Tibial artery (tissue), 4 donors: ENCODE measurements at regions of chr7 and their contacts with region 1.

Region 1: GRCh38 chr7:149090397-149091195 is at the start of gene ZNF786:
- DNase-seq: peak; percentile 78 to 91
- H3K4me3 ChIP-seq: peak within 1 kb of the TSS; percentile 92 to 99
- H3K27ac ChIP-seq: peak within 1 kb of the TSS; percentile 97 to 99
- H3K4me1 ChIP-seq: peaks cover 0 to 17% (median 9%) of the 10 kb centered on the region in 4 donors
- H3K27me3 ChIP-seq: no peaks in the 10 kb centered on the region
- CTCF ChIP-seq: peak; percentile 94

Region 2: GRCh38 chr7:149005241-149006050 is 85.2 kb before region 1 on chr7:
- intact Hi-C with region 1: loop called (anchors 2 kb)
- DNase-seq: peak; percentile 80 to 87
- H3K4me3 ChIP-seq: no peak overlapping the region
- H3K27ac ChIP-seq: no peak overlapping the region
- H3K4me1 ChIP-seq: peaks cover 0 to 13% (median 10%) of the 10 kb centered on the region in 4 donors
- H3K27me3 ChIP-seq: no peaks in the 10 kb centered on the region
- CTCF ChIP-seq: peak; percentile 81 to 89

Region 3: DNA sequence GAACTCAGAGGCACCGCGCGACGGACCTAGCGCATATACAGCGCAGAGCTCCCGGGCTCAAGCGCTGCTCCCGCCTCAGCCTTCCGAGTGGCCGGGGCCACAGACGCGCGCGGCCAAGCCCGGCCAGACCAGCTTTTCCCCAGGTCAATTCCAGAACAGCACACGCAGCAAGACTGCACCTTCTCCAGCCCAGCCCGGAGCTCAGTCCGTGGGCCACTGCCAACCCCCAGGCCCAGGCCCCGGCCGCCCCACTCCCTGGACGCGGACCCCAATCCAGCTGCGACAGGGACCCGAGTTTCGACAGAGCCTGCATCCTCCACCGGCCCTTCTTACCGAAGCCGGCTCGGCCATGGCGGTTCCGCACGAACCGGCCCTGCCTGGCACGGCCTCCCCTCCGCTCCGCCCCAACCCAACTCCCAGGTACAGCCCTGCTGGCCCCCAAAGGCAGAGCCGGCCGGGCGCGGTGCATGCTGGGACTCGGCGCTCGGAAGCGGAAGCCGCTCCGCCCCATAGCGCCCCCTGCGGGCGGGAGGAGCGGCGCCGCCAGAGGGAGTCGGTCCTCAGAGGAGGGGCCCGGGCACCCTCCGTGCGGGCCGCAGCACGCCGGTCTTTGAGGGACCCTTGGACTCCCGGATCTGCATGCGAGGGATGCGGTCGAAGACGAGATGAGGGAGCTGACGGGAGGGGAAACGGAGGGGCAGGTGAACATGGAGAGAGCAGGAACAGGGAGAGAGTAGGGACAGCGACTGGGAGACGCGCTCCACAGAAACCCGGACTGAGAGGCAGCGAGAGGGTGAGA is 35.5 kb after region 1 on chr7 and contains the start of gene ZNF425:
- intact Hi-C with region 1: loop called (anchors 5 kb)
- DNase-seq: peak; percentile 87 to 96
- H3K4me3 ChIP-seq: peak within 1 kb of the TSS; percentile 75 to 83
- H3K27ac ChIP-seq: peak within 1 kb of the TSS; percentile 98 to 99
- H3K4me1 ChIP-seq: peaks cover 0 to 16% (median 9%) of the 10 kb centered on the region in 4 donors
- H3K27me3 ChIP-seq: no peaks in the 10 kb centered on the region
- CTCF ChIP-seq: peak; percentile 96 to 98